ENCODE measurements at regions of chr9 and their contacts with region 1.

Region 1: GRCh38 chr9:110623462-110624025 is 44.0 kb upstream of the SVEP1 start:
- DNase-seq: no peak
- ATAC-seq: peak in 2 of 4 donors; percentile 38 to 39
- H3K4me3 ChIP-seq: no peak overlapping the region
- H3K27ac ChIP-seq: no peak overlapping the region
- H3K4me1 ChIP-seq: no peaks in the 10 kb centered on the region
- H3K27me3 ChIP-seq: no peaks in the 10 kb centered on the region
- CTCF ChIP-seq: peak; percentile 44 to 80 (median 68)
- POLR2A ChIP-seq: no peak

Region 2: DNA sequence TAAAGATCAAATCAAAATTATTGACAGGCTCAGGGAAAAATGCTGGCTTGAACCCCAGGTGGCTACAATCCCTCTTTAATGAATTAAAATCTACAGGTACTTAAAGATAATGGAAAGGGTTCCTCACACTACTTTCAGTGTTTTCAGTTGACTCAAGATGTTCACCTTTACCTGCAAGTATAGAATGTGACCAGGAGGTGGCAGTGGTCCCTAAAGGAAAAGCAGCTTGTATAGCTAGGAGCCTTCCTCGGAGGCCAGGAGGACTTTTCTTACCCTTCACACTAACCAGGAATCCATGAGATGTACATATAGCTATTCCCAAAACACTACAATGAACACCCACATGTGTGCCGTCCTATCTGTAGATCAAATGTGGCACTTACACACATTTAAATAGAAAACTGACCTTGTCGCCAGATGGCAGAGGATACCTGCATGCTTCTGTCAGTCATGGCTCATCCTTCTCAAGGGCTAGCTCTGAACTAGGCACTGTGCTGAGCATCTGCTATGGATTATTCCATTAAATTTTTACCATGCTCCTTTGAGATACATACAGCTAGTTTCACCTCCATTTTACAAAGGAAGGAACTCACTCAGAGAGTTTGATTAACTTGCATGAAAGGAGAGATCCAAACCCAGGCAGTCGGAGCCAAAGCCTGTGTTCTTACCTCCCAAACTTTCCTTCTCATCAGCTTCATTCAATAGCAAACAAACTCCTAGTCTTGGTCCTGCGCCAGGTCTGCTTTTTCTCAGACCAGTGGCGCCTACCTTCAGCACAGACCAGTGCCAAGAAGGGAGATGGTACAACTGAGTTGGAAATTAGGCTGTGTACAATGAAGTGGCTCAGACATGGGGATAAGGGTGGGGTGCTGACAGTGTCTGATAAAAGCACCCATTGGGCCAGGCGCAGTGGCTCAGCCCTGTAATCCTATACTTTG is 440.1 kb before region 1 on chr9:
- intact Hi-C with region 1: loop called in 6 of 10 experiments (anchors 5 to 10 kb)
- DNase-seq: peak in 4 of 5 donors; percentile 43 to 53 (median 48)
- ATAC-seq: peak in 3 of 4 donors; percentile 59 to 68 (median 66)
- H3K4me3 ChIP-seq: no peak overlapping the region
- H3K27ac ChIP-seq: no peak overlapping the region
- H3K4me1 ChIP-seq: peaks cover 0 to 9% (median 0%) of the 10 kb centered on the region in 12 donors
- H3K27me3 ChIP-seq: no peaks in the 10 kb centered on the region
- CTCF ChIP-seq: peak; percentile 59 to 77 (median 68)
- POLR2A ChIP-seq: no peak

Region 3: GRCh38 chr9:110443146-110443865 is 180.2 kb before region 1 on chr9:
- intact Hi-C with region 1: loop called in 1 of 10 experiments (anchors 10 kb)
- DNase-seq: no peak
- ATAC-seq: no peak
- H3K4me3 ChIP-seq: no peak overlapping the region
- H3K27ac ChIP-seq: no peak overlapping the region
- H3K4me1 ChIP-seq: no peaks in the 10 kb centered on the region
- H3K27me3 ChIP-seq: peaks cover 0 to 5% (median 0%) of the 10 kb centered on the region in 9 donors
- CTCF ChIP-seq: no peak
- POLR2A ChIP-seq: no peak